ENCODE measurements at regions of chr14 and their contacts with region 1.

Region 1: DNA sequence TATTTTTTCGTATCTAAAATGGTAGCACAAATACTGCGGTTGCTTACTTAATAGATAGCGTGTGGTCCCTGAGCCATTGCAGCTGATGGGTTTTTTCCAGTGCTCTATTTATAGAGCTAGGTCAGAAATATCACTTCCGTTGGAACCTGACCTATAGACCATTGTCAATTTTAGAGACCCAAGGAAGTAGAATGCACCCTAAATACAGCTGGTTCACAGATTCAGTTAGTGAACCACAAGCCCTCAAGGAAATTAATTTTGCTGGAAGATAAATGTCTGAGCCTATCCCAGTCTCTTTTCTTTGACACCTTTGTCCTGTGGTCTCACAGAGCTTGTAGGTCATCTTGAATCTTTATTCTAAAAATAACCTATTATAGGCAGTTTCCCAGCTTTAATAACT is 391.0 kb downstream of the ZFP36L1 start:
- DNase-seq: peak; percentile 96
- ATAC-seq: peak; percentile 57
- H3K4me3 ChIP-seq: no peak overlapping the region
- H3K27ac ChIP-seq: peak overlapping the region; percentile 100
- H3K4me1 ChIP-seq: peaks cover 66% of the 10 kb centered on the region
- H3K27me3 ChIP-seq: no peaks in the 10 kb centered on the region
- CTCF ChIP-seq: no peak
- EP300 ChIP-seq: peak; percentile 94 to 99
- POLR2A ChIP-seq: no peak
- RAD21 ChIP-seq: peak; percentile 21; the same call in 1 of the 2 replicates

Region 2: GRCh38 chr14:68135566-68135965 is 266.3 kb before region 1 on chr14:
- CTCF ChIA-PET with region 1: no interaction called
- POLR2A ChIA-PET with region 1: no interaction called
- RAD21 ChIA-PET with region 1: no interaction called
- SMC1A ChIA-PET with region 1: no interaction called
- in situ Hi-C with region 1: no loop called
- intact Hi-C with region 1: no loop called
- DNase-seq: no peak
- ATAC-seq: no peak
- H3K4me3 ChIP-seq: no peak overlapping the region
- H3K27ac ChIP-seq: no peak overlapping the region
- H3K4me1 ChIP-seq: peaks cover 7% of the 10 kb centered on the region
- H3K27me3 ChIP-seq: no peaks in the 10 kb centered on the region
- CTCF ChIP-seq: no peak
- EP300 ChIP-seq: no peak
- POLR2A ChIP-seq: no peak
- RAD21 ChIP-seq: no peak

Region 3: DNA sequence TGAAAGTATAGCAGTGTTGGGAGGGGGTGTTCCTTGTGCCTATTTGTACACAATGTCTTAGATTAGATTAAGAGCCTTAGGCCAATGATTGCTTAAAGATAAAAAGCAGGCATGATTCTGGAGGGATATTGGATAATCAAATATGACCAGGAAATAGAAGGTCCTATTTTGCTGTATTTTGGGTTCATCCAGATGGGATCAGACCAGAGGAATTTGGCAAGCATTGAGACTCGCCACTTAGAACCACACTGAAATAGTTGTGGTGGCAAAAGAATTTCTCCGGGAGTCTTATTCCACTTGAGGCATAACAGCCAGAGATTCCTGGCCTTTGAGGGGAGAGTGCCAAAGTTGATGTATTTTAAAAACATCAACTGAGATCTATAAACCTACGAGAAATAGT is 255.0 kb before region 1 on chr14:
- CTCF ChIA-PET with region 1: no interaction called
- POLR2A ChIA-PET with region 1: no interaction called
- RAD21 ChIA-PET with region 1: no interaction called
- SMC1A ChIA-PET with region 1: no interaction called
- in situ Hi-C with region 1: no loop called
- intact Hi-C with region 1: no loop called
- DNase-seq: no peak
- ATAC-seq: no peak
- H3K4me3 ChIP-seq: no peak overlapping the region
- H3K27ac ChIP-seq: no peak overlapping the region
- H3K4me1 ChIP-seq: no peaks in the 10 kb centered on the region
- H3K27me3 ChIP-seq: no peaks in the 10 kb centered on the region
- CTCF ChIP-seq: no peak
- EP300 ChIP-seq: no peak
- POLR2A ChIP-seq: no peak
- RAD21 ChIP-seq: no peak

Region 4: GRCh38 chr14:68274725-68275124 is 127.1 kb before region 1 on chr14:
- CTCF ChIA-PET with region 1: interaction called, 8 read pairs
- POLR2A ChIA-PET with region 1: interaction called, 15 read pairs
- RAD21 ChIA-PET with region 1: interaction called, 34 read pairs
- SMC1A ChIA-PET with region 1: interaction called, 227 read pairs
- in situ Hi-C with region 1: no loop called
- intact Hi-C with region 1: loop called (anchors 5 kb)
- DNase-seq: no peak
- ATAC-seq: no peak
- H3K4me3 ChIP-seq: no peak overlapping the region
- H3K27ac ChIP-seq: peak overlapping the region; percentile 91
- H3K4me1 ChIP-seq: peaks cover 78% of the 10 kb centered on the region
- H3K27me3 ChIP-seq: no peaks in the 10 kb centered on the region
- CTCF ChIP-seq: peak in 1 of 3 experiments; percentile 22; a peak in 1 of 6 replicates
- EP300 ChIP-seq: no peak
- POLR2A ChIP-seq: no peak
- RAD21 ChIP-seq: 0 out of 2 replicates have a peak, but pooled peaks have one; percentile 21

Region 5: DNA sequence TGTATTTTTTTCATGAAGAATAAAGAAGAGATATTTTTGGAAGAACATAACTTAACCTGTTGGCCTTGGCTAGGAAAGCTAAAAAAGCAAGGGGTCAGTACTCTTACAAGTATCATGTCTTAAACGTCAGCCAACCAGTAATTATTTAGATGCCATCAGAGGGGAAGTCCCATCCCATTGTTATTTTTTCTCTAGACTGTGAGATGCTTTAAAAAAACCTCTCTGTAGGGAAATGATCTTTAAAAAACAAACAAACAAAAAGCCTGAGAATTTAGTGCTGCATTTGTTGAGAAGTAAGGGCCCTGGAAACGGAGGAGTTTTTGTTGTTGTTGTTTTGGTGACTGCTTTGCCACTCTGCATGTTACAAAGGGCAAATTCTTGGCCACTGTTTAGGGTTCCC is 83.0 kb before region 1 on chr14:
- CTCF ChIA-PET with region 1: interaction called, 5 read pairs
- POLR2A ChIA-PET with region 1: interaction called, 25 read pairs
- RAD21 ChIA-PET with region 1: interaction called, 197 read pairs
- SMC1A ChIA-PET with region 1: interaction called, 38 read pairs
- in situ Hi-C with region 1: no loop called
- intact Hi-C with region 1: no loop called
- DNase-seq: no peak
- ATAC-seq: peak; percentile 49
- H3K4me3 ChIP-seq: no peak overlapping the region
- H3K27ac ChIP-seq: no peak overlapping the region
- H3K4me1 ChIP-seq: peaks cover 54% of the 10 kb centered on the region
- H3K27me3 ChIP-seq: no peaks in the 10 kb centered on the region
- CTCF ChIP-seq: no peak; a peak in 1 of 6 replicates
- EP300 ChIP-seq: peak in 1 of 2 experiments; percentile 23; a peak in 1 of 4 replicates
- POLR2A ChIP-seq: no peak
- RAD21 ChIP-seq: no peak

Region 6: GRCh38 chr14:68418174-68419118 is 16.6 kb after region 1 on chr14:
- CTCF ChIA-PET with region 1: interaction called, 3 read pairs
- POLR2A ChIA-PET with region 1: interaction called, 4 read pairs
- RAD21 ChIA-PET with region 1: interaction called, 10 read pairs
- SMC1A ChIA-PET with region 1: interaction called, 51 read pairs
- in situ Hi-C with region 1: no loop called
- intact Hi-C with region 1: no loop called
- DNase-seq: no peak
- ATAC-seq: peak; percentile 80
- H3K4me3 ChIP-seq: no peak overlapping the region
- H3K27ac ChIP-seq: peak overlapping the region; percentile 51
- H3K4me1 ChIP-seq: peaks cover 19% of the 10 kb centered on the region
- H3K27me3 ChIP-seq: no peaks in the 10 kb centered on the region
- CTCF ChIP-seq: no peak
- EP300 ChIP-seq: no peak
- POLR2A ChIP-seq: no peak
- RAD21 ChIP-seq: no peak

Region 7: DNA sequence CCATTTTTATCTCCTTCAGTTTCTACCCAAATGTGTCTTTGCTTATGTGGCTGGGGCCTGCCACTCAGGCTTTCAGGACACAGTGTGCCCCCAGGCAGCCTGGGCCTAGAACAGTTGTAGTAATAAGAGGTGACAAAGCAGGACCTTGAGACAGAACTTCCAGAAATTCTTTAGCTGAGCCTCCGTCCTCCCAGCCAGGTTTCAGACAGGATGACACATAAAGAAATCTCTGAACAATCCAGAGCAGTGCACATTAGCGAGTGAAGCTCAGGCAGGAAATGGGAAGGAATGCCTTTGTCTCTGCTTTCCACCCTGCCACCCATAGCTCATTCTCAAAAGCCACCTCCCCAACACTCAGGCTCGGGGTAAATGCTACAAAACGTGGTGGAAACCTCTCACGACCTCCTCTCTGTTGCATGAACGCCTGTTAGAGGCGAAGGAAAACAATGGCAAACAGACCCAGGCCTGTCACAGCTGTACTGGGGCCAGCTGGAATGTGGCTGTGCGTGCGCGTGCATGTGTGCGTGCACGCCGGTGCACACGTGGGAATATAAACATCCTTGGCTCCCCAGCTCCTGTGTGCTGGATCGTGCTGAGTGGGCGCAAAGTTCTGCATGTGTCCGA is 104.3 kb after region 1 on chr14:
- CTCF ChIA-PET with region 1: interaction called, 4 read pairs
- POLR2A ChIA-PET with region 1: interaction called, 10 read pairs
- RAD21 ChIA-PET with region 1: interaction called, 45 read pairs
- SMC1A ChIA-PET with region 1: interaction called, 39 read pairs
- in situ Hi-C with region 1: no loop called
- intact Hi-C with region 1: no loop called
- DNase-seq: no peak
- ATAC-seq: peak; percentile 32
- H3K4me3 ChIP-seq: peak overlapping the region; percentile 21
- H3K27ac ChIP-seq: peak overlapping the region; percentile 76
- H3K4me1 ChIP-seq: peaks cover 31% of the 10 kb centered on the region
- H3K27me3 ChIP-seq: no peaks in the 10 kb centered on the region
- CTCF ChIP-seq: no peak
- EP300 ChIP-seq: no peak
- POLR2A ChIP-seq: no peak
- RAD21 ChIP-seq: no peak

Region 8: DNA sequence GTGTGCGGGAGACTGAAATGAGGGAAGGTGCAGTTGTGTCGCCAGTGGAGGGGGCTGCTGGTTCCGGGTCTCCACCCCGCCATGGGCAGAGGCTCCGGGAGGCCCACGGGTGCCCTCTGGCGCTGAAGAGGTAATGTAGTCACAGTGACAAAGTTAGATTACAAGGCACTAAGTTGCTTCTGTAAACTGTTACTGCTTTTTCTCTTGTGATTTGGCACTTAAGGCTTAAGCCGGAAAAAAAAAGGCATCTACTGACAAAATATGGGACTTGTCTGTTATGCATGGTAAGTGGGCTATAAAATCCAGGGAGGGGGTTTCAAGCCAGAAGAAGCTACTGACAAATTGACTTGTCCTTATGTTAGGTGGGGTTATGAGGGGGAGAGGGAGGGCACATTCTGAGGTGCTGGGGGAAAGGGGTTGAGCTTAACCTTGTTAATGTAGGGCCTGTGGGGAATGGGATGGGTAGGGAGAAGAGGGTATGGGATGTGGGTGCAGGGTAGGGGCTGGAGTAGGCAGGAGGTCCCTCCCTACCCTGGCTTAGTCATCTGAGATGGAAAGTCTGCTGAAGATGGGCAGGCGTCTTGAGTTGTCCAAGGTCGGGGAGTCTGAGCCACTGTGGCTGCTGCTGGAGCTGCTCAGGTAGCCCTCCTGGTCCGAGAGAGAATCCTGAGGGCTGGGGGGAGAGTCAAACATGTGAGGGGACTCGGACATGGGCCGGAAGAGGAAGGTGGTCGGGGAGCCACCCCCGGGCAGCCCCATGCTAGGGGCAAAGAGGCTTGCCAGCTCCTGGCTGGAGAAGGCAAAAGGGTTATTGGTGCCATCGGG is 387.4 kb after region 1 on chr14:
- CTCF ChIA-PET with region 1: interaction called, 16 read pairs
- POLR2A ChIA-PET with region 1: interaction called, 23 read pairs
- RAD21 ChIA-PET with region 1: interaction called, 154 read pairs
- SMC1A ChIA-PET with region 1: interaction called, 79 read pairs
- in situ Hi-C with region 1: loop called (anchors 5 kb)
- intact Hi-C with region 1: loop called (anchors 2 kb)
- DNase-seq: no peak
- ATAC-seq: peak; percentile 39
- H3K4me3 ChIP-seq: peak overlapping the region; percentile 97
- H3K27ac ChIP-seq: peak overlapping the region; percentile 100
- H3K4me1 ChIP-seq: peaks cover 32% of the 10 kb centered on the region
- H3K27me3 ChIP-seq: no peaks in the 10 kb centered on the region
- CTCF ChIP-seq: peak; percentile 76 to 93 (median 85); a peak in 5 of 6 replicates
- EP300 ChIP-seq: no peak
- POLR2A ChIP-seq: peak; percentile 77
- RAD21 ChIP-seq: peak; percentile 80